CD4-positive, alpha-beta T cell (primary cell): ENCODE measurements at regions of chr10 and their contacts with region 1.

Region 1: DNA sequence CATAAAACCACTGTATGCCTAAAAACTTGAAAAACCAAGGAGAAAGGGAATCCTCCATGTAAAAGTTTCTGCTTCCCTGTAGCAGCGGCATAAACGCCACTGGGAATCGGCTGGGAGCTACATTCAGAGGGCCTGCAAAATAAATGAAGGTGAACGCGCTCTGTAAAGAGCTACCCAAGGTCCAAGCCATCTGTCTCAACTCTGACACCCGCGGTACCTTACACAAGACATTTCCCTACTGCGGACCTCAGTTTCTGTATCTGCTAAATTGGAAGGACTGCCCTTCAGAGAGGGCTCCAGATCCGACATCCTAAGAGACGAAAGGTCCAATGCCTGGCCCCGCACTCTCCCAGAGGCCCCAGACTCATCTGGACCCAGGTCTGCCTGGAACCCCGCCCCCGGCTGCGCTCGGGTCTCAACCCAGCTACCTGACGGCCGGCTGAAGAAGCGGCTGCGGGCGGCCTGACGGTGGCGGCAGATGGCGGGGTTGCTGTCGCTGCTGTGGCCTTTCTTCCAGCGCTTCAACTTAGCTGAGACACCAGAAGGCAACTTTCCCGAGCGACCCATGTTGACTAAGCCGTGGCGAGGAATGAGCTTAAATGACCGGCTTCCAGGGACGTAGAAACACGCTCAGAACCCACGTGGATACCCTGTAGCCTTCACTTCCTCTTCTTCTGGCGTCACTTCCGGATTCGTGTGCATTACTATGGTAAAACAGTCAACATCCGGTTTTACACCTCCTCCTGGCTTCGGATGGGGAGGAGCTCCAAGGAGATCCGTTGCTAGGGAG is at the start of gene RRP12:
- DNase-seq: peak; percentile 64 to 98 (median 72)
- ATAC-seq: peak; percentile 95
- H3K4me3 ChIP-seq: peak within 1 kb of the TSS; percentile 85
- H3K4me3 Mint-ChIP-seq: peak within 1 kb of the TSS; percentile 95
- H3K27ac ChIP-seq: peak within 1 kb of the TSS; percentile 81 to 97
- H3K27ac Mint-ChIP-seq: peak within 1 kb of the TSS; percentile 89
- H3K4me1 ChIP-seq: peaks cover 17% of the 10 kb centered on the region
- H3K4me1 Mint-ChIP-seq: peaks cover 16% of the 10 kb centered on the region
- H3K27me3 ChIP-seq: no peaks in the 10 kb centered on the region
- H3K27me3 Mint-ChIP-seq: no peaks in the 10 kb centered on the region
- CTCF ChIP-seq: peak; percentile 5
- total RNA-seq, gene RRP12: 84.2 to 87.6 TPM

Region 2: DNA sequence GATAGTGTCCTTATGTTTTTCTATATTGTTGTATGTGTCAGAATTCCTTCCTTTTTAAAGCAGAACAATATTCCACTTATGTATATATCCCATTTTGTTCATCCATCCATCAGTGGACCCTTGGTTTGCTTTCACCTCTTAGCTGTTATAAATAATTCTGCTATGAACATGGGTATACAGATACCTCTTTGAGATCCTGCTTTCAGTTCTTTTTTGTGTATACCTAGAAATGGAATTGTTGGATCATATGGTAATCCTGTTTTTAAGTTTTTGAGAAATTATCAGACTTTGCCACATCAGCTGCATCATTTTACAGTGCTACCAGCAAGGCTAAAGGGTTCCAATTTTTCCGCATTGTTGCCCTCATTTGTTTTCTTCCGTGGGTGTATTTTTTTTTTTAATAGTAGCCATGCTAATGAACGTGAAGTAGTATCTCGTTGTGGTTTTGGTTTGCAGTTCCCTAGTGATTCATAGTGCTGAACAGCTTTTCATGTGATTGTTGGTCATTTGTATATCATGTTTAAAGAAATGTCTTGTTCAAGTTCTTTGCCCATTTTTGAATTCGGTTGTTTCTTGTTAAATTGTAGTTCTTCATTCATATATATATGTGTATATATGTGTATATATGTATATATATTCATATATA is 481.0 kb before region 1 on chr10:
- CTCF ChIA-PET with region 1: no interaction called
- POLR2A ChIA-PET with region 1: no interaction called
- intact Hi-C with region 1: no loop called
- DNase-seq: no peak
- ATAC-seq: no peak
- H3K4me3 ChIP-seq: no peak overlapping the region
- H3K4me3 Mint-ChIP-seq: no peak overlapping the region
- H3K27ac ChIP-seq: no peak overlapping the region
- H3K27ac Mint-ChIP-seq: no peak overlapping the region
- H3K4me1 ChIP-seq: no peaks in the 10 kb centered on the region
- H3K4me1 Mint-ChIP-seq: peaks cover 53% of the 10 kb centered on the region
- H3K27me3 ChIP-seq: no peaks in the 10 kb centered on the region
- H3K27me3 Mint-ChIP-seq: no peaks in the 10 kb centered on the region
- CTCF ChIP-seq: no peak

Region 3: GRCh38 chr10:97292097-97292862 is 108.6 kb before region 1 on chr10 and contains the start of gene ARHGAP19:
- CTCF ChIA-PET with region 1: no interaction called
- POLR2A ChIA-PET with region 1: interaction called, 5 read pairs
- intact Hi-C with region 1: loop called (anchors 2 to 5 kb)
- DNase-seq: peak; percentile 86 to 97 (median 90)
- ATAC-seq: peak; percentile 99
- H3K4me3 ChIP-seq: peak within 1 kb of the TSS; percentile 72
- H3K4me3 Mint-ChIP-seq: peak within 1 kb of the TSS; percentile 95
- H3K27ac ChIP-seq: peak within 1 kb of the TSS; percentile 49 to 65
- H3K27ac Mint-ChIP-seq: peak within 1 kb of the TSS; percentile 50
- H3K4me1 ChIP-seq: peaks cover 13% of the 10 kb centered on the region
- H3K4me1 Mint-ChIP-seq: peaks cover 18% of the 10 kb centered on the region
- H3K27me3 ChIP-seq: no peaks in the 10 kb centered on the region
- H3K27me3 Mint-ChIP-seq: no peaks in the 10 kb centered on the region
- CTCF ChIP-seq: no peak
- total RNA-seq, gene ARHGAP19: 6.9 to 8.8 TPM

Region 4: DNA sequence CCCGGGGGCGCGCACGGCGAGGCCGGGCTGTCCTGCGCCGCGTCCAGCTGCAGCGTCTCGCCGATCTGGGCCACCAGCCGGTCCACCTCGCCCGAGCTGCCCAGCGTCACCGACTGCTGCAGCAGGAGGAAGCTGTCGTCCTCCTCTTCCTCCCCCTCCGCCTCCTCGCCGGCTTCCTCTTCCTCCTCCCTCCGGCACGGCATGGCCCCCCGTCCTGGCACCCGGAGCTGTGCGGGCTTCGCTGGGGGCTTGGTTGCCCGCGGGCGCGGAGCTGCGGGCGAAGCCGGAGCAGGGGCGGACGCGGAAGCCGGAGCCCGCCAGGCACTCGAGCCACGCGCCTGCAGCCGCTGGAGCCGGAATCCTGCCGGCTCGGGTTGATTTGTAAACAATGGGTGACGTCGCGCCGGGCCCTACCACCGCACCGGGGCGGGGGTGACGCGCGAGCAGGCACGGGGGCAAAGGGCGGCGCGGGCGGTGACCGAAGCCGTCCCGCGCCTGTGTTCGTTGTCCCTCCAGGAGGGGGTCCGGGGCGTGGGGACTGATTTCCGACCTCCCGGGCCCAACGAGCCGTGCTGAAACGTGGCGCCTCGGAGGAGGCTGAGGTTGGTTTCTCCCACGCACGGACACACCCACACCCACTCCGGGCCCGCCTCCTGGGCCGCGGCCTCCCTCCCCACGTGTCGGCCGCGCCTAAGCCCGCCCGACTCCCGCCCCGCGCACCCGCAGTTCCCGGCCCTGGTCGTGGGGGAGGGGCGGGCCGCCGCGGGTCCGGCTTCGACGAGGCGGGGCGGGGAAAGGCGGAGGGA is 66.3 kb before region 1 on chr10 and contains the start of gene FRAT2:
- CTCF ChIA-PET with region 1: interaction called, 3 read pairs
- POLR2A ChIA-PET with region 1: interaction called, 18 read pairs
- intact Hi-C with region 1: loop called (anchors 2 kb)
- DNase-seq: peak; percentile 78 to 95 (median 85)
- ATAC-seq: peak; percentile 88
- H3K4me3 ChIP-seq: peak within 1 kb of the TSS; percentile 76
- H3K4me3 Mint-ChIP-seq: peak within 1 kb of the TSS; percentile 96
- H3K27ac ChIP-seq: peak within 1 kb of the TSS; percentile 97
- H3K27ac Mint-ChIP-seq: peak within 1 kb of the TSS; percentile 91
- H3K4me1 ChIP-seq: peaks cover 43% of the 10 kb centered on the region
- H3K4me1 Mint-ChIP-seq: peaks cover 50% of the 10 kb centered on the region
- H3K27me3 ChIP-seq: no peaks in the 10 kb centered on the region
- H3K27me3 Mint-ChIP-seq: peaks cover 3% of the 10 kb centered on the region
- CTCF ChIP-seq: no peak
- total RNA-seq, gene FRAT2: 27.0 to 27.6 TPM

Region 5: GRCh38 chr10:97425964-97426775 is 25.3 kb after region 1 on chr10 and contains the start of gene PGAM1:
- CTCF ChIA-PET with region 1: no interaction called
- POLR2A ChIA-PET with region 1: interaction called, 3 read pairs
- intact Hi-C with region 1: loop called in 1 of 2 experiments (anchors 1 kb)
- DNase-seq: peak; percentile 90 to 99 (median 94)
- ATAC-seq: peak; percentile 82
- H3K4me3 ChIP-seq: peak within 1 kb of the TSS; percentile 78
- H3K4me3 Mint-ChIP-seq: peak within 1 kb of the TSS; percentile 95
- H3K27ac ChIP-seq: peak within 1 kb of the TSS; percentile 75 to 85
- H3K27ac Mint-ChIP-seq: peak within 1 kb of the TSS; percentile 89
- H3K4me1 ChIP-seq: peaks cover 43% of the 10 kb centered on the region
- H3K4me1 Mint-ChIP-seq: peaks cover 46% of the 10 kb centered on the region
- H3K27me3 ChIP-seq: no peaks in the 10 kb centered on the region
- H3K27me3 Mint-ChIP-seq: no peaks in the 10 kb centered on the region
- CTCF ChIP-seq: peak; percentile 64
- total RNA-seq, gene PGAM1: 50.7 to 55.5 TPM

Region 6: DNA sequence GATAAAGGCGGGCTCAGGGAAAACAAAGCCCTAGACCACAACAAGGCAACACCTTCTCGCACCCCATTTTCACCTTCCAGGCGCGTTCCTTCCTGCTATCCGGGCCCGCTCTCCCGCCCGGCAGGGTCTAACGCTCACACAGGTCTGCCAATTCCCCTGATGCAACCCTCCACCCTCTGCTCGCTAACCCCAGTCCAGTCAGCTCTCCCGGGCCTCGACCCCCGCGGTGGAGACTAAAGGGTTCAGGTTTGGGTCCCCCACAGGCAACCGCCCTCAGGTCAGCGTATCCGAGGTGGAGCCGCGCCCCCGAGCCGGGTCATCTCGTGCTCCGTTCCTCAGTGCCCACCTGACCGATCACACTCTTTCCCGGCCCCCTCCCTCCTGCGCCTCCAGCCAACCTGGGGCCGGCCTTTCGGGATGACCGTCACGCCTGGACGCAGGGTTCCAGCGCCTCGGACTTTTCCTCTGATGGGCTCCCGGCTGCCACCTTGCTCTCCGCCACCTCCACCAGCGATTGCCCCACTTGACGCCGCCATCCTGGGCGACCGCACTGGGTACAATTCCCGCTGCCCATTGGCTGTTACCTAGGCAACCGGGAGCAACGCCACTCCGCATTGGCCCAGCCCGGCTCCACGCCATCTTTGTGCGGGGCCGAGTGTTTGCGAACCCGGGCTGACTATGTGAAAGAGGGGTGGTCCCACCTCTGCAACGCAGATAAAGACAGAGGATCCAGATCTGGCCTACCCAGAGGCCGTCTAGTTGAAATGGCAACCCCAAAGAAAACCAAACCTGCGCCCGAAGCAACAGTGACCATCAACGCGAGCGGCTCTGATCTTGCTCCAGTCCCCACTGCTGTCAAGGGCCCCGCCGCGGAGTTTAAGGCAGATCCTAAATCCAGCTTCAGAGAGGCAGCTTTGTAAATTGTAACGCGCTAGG is 232.4 kb after region 1 on chr10 and contains the start of gene MORN4:
- CTCF ChIA-PET with region 1: no interaction called
- POLR2A ChIA-PET with region 1: no interaction called
- intact Hi-C with region 1: loop called in 1 of 2 experiments (anchors 5 kb)
- DNase-seq: peak; percentile 85 to 95 (median 89)
- ATAC-seq: peak; percentile 99
- H3K4me3 ChIP-seq: peak within 1 kb of the TSS; percentile 98
- H3K4me3 Mint-ChIP-seq: peak within 1 kb of the TSS; percentile 94
- H3K27ac ChIP-seq: no peak within 1 kb of the TSS
- H3K27ac Mint-ChIP-seq: peak within 1 kb of the TSS; percentile 71
- H3K4me1 ChIP-seq: peaks cover 18% of the 10 kb centered on the region
- H3K4me1 Mint-ChIP-seq: peaks cover 16% of the 10 kb centered on the region
- H3K27me3 ChIP-seq: no peaks in the 10 kb centered on the region
- H3K27me3 Mint-ChIP-seq: no peaks in the 10 kb centered on the region
- CTCF ChIP-seq: no peak
- total RNA-seq, gene MORN4: 0.36 to 0.39 TPM

Region 7: DNA sequence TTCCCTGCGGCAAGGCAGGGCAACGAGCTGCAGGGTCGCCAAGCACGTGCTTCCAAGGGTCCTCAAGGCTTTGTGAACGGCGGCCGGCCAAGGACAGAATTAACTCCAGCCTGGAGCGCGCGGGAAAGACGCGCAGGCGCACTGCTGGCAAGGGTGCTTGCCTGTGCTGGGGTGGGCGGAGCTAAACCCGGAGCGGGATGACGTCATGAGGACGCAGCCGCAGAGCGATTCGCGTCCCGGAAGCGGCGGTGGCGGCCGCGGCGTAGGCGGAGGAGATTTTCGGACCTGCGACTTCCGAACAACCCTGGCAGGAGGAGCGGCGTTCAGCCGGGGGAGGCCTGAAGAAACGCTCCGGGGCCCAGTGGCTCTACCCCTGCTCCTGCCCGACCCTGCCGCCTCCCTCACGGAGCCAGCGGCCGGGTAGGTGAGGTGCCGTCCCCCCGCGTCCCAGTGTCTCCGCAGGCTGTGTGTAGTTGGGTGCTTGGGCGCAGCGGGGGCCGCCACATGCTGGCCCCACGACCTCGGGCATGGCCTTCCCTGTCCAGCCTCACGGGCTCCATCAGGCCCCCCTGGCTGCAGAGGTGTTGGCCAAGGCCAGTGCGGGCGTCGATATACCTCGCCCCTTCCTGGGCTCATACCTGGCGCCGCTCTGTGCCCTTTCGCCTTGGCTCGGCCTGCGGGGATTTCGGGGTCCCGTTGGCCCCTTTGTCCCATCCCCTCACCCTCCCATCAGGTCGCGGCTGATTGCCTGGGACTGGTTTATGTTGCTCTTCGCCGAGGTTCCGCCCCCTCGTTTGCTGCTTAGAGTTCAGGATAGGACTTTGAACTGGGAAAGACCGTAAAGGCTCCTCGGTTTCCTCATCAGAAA is 336.3 kb after region 1 on chr10 and contains the start of gene ZFYVE27:
- CTCF ChIA-PET with region 1: no interaction called
- POLR2A ChIA-PET with region 1: no interaction called
- intact Hi-C with region 1: loop called (anchors 5 kb)
- DNase-seq: peak; percentile 91 to 98 (median 94)
- ATAC-seq: peak; percentile 90
- H3K4me3 ChIP-seq: peak within 1 kb of the TSS; percentile 80
- H3K4me3 Mint-ChIP-seq: peak within 1 kb of the TSS; percentile 97
- H3K27ac ChIP-seq: peak within 1 kb of the TSS; percentile 85 to 92
- H3K27ac Mint-ChIP-seq: peak within 1 kb of the TSS; percentile 92
- H3K4me1 ChIP-seq: peaks cover 37% of the 10 kb centered on the region
- H3K4me1 Mint-ChIP-seq: peaks cover 57% of the 10 kb centered on the region
- H3K27me3 ChIP-seq: no peaks in the 10 kb centered on the region
- H3K27me3 Mint-ChIP-seq: no peaks in the 10 kb centered on the region
- CTCF ChIP-seq: no peak
- total RNA-seq, gene ZFYVE27: 58.4 to 60.6 TPM